Posterior cingulate gyrus (tissue), 11 donors: ENCODE measurements at regions of chr7 and their contacts with region 1.

Region 1: DNA sequence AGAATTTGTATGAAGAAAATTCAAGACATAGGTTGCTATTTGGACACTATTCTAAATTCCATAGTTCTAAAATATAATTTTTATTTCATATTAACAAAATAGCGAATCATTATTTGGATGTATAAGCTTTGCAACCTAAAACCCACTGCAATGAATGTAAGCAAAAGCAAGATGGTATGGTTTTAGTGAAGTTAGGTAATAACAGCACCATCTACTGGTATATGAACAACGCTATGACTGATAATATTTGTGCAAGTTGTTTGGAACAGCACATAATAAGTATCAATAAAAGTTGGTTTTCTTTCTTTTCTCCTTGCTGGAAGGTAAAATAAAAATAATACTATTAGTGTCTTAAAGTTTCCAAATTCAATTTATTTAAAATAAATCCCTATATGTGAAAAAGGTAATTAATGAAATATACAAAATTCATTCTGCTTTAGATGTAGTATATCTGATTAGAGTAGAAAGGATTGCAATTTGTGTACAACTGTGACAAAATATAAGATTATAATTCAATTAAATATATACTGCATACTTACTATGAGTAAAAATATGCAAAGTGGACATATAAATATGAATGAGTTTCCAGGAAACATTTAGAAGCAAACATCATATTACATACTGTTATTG is 79.0 kb upstream of the LSM8 start:
- DNase-seq: no peak

Region 2: DNA sequence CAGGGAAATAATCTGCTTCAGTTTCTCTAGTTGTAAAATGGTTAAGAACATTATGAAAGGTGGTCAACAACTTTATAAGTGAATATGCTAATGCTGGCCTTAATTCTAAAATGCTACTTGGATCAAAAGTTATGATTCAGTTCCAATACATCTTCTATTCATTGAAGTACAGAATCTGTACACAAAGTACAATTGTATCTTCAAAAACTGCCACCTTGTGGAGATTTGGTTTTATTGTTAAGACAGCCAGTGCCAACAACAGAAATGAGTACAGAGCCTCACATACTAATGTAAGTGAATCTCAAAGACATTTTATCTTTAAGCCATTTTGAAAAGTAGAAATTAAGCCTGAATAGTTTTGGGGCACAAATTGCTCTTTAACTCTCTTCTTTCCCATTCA is 431.1 kb before region 1 on chr7:
- intact Hi-C with region 1: loop called (anchors 5 kb)
- DNase-seq: no peak

Region 3: GRCh38 chr7:118158766-118159165 is 53.8 kb after region 1 on chr7:
- intact Hi-C with region 1: no loop called
- DNase-seq: no peak